OCI-LY7 (cell line): ENCODE measurements at regions of chr12 and their contacts with region 1.

Region 1: GRCh38 chr12:104506676-104507401 is 50.1 kb downstream of the CHST11 start:
- DNase-seq: no peak
- H3K4me3 ChIP-seq: no peak overlapping the region
- H3K27ac ChIP-seq: no peak overlapping the region
- H3K4me1 ChIP-seq: peaks cover 92% of the 10 kb centered on the region
- CTCF ChIP-seq: no peak

Region 2: DNA sequence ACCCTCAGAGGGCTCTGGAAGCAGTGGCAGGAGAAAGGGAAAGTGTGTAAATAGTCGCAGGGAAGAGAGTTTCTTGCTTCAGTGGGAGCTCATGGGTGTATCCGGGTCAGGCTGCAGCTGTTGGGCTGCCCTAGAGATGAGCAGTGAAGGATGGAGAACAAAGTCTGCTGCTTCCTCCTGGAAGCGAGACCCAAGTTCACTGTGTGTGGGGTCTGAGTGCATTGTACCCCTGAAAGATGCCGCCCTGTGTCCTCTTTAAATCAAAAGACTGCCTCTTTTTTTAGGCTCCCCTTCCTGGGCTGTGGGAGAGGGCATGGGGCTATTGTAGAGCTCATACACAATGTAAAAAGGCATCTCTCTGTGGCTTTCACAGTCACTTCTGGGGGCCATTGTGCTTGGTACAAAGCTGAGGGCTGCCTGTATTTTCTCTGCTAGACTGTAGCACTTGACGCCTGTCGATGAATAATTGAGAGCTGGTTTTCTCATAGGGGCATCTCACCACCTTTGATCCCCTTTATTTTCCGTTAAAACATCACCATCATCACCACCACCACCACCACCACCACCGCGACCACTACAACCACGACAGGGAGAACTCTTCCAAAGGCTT is 33.4 kb before region 1 on chr12:
- CTCF ChIA-PET with region 1: no interaction called
- POLR2A ChIA-PET with region 1: interaction called, 7 read pairs
- intact Hi-C with region 1: loop called (anchors 1 kb)
- DNase-seq: peak; percentile 80
- H3K4me3 ChIP-seq: peak overlapping the region; percentile 58
- H3K27ac ChIP-seq: peak overlapping the region; percentile 89
- H3K4me1 ChIP-seq: peaks cover 92% of the 10 kb centered on the region
- CTCF ChIP-seq: no peak